ENCODE measurements at regions of chr1 and their contacts with region 1.

Region 1: DNA sequence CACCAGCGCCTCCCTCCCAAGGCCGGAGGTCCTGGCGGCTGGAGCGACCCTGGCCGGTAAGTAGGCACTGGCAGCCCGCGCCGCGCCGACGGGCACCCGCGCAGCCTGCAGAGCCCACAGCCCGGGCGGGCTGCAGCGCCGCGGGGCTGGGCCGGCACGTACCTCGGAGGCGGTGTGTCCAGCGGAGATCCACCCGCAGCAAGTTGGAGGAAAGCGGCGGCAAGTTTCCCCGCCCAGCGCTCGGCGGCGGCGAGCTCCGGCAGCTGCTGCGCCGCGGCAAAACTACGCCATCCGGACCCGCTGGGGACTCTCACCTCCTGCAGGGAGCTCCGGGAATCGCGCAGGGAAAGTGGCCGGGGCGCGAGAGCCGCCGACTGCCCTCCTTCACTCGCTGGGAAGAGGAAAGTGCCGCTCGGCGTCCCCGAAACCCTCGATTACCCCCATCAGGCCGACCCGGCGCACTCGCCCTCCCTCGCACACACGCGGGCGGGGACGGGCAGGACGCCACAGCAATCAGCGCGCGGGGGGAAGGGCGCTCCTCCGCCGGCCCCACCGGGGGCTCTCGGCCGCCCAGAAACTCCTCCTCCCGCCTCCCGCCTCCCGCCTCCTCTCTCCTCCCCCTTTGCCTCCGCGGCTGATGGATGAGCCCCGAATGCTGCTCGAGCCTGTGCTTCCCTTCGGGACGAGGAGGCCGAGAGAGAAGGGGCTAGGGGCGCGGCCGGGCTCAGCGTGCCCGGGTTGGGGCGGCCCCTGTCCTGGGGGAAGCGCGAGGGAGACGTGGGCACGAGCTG is at the start of gene TGFBR3:
- DNase-seq: peak; percentile 86
- H3K4me3 Mint-ChIP-seq: peak within 1 kb of the TSS; percentile 99
- H3K27ac Mint-ChIP-seq: peak within 1 kb of the TSS; percentile 92
- H3K4me1 Mint-ChIP-seq: peaks cover 26% of the 10 kb centered on the region
- H3K27me3 Mint-ChIP-seq: no peaks in the 10 kb centered on the region
- CTCF ChIP-seq: peak; percentile 51
- total RNA-seq, gene TGFBR3: 7.0 and 12.0 TPM in 2 replicates

Region 2: DNA sequence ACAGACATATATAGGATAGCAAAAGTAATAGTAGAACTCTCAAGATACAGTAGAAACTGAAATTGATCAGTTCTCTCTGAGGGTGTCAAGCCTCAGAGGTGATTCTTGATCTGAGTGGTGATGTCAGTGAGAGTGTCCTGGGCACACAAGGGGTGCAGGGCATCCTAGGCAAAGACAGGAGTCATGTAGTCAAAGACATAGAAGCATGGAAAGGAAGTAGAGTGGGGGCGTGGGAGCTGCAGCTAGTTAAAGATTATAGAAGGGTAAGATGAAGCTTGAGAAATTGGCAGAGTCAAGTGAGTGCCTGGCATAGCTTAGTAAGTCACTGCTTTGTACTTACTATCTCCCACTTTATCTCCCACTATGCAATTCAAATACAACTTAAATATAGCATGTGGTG is 362.4 kb before region 1 on chr1:
- CTCF ChIA-PET with region 1: interaction called, 10 read pairs
- POLR2A ChIA-PET with region 1: interaction called, 5 read pairs
- intact Hi-C with region 1: no loop called
- DNase-seq: no peak
- H3K4me3 Mint-ChIP-seq: no peak overlapping the region
- H3K27ac Mint-ChIP-seq: peak overlapping the region; percentile 13
- H3K4me1 Mint-ChIP-seq: no peaks in the 10 kb centered on the region
- H3K27me3 Mint-ChIP-seq: no peaks in the 10 kb centered on the region
- CTCF ChIP-seq: no peak

Region 3: GRCh38 chr1:91611498-91611917 is 274.4 kb before region 1 on chr1:
- CTCF ChIA-PET with region 1: interaction called, 11 read pairs
- POLR2A ChIA-PET with region 1: interaction called, 8 read pairs
- intact Hi-C with region 1: no loop called
- DNase-seq: peak; percentile 18
- H3K4me3 Mint-ChIP-seq: no peak overlapping the region
- H3K27ac Mint-ChIP-seq: peak overlapping the region; percentile 74
- H3K4me1 Mint-ChIP-seq: peaks cover 45% of the 10 kb centered on the region
- H3K27me3 Mint-ChIP-seq: no peaks in the 10 kb centered on the region
- CTCF ChIP-seq: no peak

Region 4: DNA sequence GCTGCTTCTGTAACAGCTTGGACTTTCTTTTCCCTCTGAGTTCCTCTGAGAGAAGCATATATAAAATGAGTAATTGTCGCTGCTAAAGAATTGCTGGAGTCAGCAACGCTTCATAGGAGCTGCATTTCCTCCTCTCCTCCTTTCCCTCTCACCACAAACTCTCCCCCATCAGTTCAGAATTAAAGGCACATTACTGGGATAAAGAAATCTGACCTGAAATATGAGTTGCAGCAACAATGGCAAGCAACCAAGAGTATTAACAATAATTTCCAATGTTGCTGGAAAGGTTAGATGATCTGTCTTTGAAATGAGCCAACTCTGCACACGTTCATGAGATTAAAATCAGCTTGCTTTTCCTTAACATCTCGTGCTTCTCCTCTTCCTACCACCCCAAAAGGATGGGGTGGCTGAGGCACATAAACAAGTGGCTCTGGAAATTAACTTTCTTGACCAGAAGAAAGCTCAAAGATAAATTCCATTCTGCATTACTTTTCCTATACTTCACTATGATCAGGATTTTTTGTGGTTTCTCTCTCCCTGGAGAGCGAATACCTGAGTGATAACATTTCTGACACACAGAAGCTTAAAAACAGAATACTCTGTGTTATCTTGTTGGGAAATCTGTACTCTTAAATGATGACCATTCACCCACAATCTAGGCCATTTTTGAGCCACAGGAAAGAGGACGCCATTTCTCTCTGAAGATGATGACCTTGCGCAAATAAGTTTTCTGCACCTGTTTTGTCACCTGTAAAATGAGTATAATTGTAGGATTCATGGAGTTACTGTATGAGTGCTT is 90.1 kb before region 1 on chr1:
- CTCF ChIA-PET with region 1: interaction called, 8 read pairs
- POLR2A ChIA-PET with region 1: interaction called, 15 read pairs
- intact Hi-C with region 1: loop called (anchors 5 kb)
- DNase-seq: no peak
- H3K4me3 Mint-ChIP-seq: peak overlapping the region; percentile 27
- H3K27ac Mint-ChIP-seq: peak overlapping the region; percentile 37
- H3K4me1 Mint-ChIP-seq: peaks cover 59% of the 10 kb centered on the region
- H3K27me3 Mint-ChIP-seq: no peaks in the 10 kb centered on the region
- CTCF ChIP-seq: no peak

Region 5: DNA sequence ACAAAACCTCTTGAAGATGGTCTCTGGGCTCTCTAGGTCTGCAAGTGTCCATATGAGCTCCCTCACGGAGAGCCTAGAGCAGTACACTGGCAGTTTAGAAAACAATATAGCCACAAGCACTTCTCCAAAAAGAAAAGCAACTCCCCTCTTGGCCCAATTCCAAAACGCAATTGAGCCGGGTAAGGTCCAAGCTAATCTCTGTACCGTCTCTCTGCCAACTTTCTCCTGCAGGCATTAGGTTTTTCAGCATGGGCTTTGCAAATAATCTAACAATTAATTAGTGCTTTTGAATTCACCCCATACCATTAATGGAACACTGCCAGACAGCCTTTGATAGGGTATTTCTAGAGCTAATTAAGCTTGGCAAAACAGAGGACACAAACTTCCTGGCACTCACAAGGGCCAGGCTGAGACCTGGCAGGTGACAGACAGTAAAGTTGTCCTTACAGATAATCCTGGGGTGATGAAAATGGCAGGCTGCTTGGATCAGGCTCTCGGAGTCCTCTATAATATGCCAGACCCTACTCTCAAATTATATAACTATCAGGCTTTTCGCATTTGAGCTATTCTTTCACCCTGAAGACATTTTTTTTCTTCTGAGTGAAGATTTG is 39.8 kb before region 1 on chr1:
- CTCF ChIA-PET with region 1: interaction called, 8 read pairs
- POLR2A ChIA-PET with region 1: interaction called, 71 read pairs
- intact Hi-C with region 1: loop called (anchors 2 kb)
- DNase-seq: peak; percentile 91
- H3K4me3 Mint-ChIP-seq: peak overlapping the region; percentile 25
- H3K27ac Mint-ChIP-seq: peak overlapping the region; percentile 88
- H3K4me1 Mint-ChIP-seq: peaks cover 40% of the 10 kb centered on the region
- H3K27me3 Mint-ChIP-seq: no peaks in the 10 kb centered on the region
- CTCF ChIP-seq: no peak

Region 6: DNA sequence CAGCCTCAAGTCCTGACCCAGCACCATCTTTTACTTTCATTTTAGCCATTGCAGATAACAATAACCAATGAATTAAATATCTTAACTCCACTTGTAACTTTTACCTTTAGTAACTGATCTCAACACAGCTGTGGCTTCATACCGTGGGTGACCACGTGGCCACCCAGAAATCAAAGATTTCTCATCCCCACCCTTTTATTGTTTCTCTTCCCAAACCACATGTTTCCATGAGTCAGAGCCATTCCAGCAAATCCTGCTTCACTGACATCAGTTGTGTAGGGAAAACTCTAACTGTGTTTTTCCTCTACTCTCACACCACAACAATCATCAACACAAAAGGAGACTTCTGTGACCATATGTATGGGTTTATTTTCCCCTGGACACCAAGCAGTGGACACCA is 38.2 kb after region 1 on chr1:
- CTCF ChIA-PET with region 1: interaction called, 21 read pairs
- POLR2A ChIA-PET with region 1: interaction called, 7 read pairs
- intact Hi-C with region 1: loop called (anchors 2 kb)
- DNase-seq: peak; percentile 67
- H3K4me3 Mint-ChIP-seq: no peak overlapping the region
- H3K27ac Mint-ChIP-seq: peak overlapping the region; percentile 87
- H3K4me1 Mint-ChIP-seq: peaks cover 17% of the 10 kb centered on the region
- H3K27me3 Mint-ChIP-seq: no peaks in the 10 kb centered on the region
- CTCF ChIP-seq: no peak

Region 7: DNA sequence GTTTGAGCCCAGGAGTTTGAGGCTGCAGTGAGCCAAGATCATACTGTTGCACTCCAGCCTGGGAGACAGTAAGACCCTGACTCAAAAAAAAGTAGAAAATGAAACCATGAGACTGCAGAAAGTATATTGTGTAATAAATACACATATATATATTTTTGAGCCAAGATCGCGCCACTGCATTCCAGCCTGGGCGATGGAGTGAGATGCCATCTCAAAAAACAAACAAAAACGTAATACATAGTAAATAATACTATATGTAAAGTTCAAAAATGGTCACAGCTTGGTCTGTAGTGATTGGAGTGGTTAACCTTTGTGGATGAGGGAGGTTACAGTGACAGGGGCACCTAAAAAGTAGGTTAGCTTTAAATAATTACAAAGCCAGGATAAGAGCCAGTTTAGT is 73.1 kb after region 1 on chr1:
- CTCF ChIA-PET with region 1: no interaction called
- POLR2A ChIA-PET with region 1: no interaction called
- intact Hi-C with region 1: no loop called
- DNase-seq: no peak
- H3K4me3 Mint-ChIP-seq: no peak overlapping the region
- H3K27ac Mint-ChIP-seq: no peak overlapping the region
- H3K4me1 Mint-ChIP-seq: no peaks in the 10 kb centered on the region
- H3K27me3 Mint-ChIP-seq: no peaks in the 10 kb centered on the region
- CTCF ChIP-seq: no peak